Activated CD4-positive, alpha-beta T cell treated with anti-CD3 and anti-CD28 coated beads, Interleukin-2, amount 10 ng/mL, durations not matched to agents 24 days and 14 days (primary cell): ENCODE measurements at regions of chr7 and their contacts with region 1.

Region 1: DNA sequence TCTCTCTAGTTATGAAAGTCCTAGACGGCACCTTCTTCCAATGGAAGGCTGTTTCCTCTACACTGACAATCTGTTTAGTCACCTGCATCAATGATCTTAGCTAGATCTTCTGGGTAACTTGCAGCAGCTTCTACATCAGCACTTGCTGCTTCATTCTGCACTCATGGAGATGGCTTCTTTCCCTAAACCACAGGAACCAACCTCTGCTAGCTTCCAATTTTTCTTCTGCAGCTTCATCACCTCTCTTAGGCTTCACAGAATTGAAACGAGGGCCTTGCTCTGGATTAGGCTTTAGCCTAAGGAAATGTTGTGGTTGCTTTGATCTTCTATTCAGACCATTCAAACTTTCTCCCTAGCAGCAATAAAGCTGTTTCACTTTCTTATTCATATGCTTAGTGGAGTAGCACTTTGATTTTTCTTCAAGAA is 24.6 kb downstream of the NAMPT start:
- DNase-seq: peak; percentile 73
- H3K4me3 Mint-ChIP-seq: peak overlapping the region; percentile 62
- H3K27ac Mint-ChIP-seq: peak overlapping the region; percentile 78
- H3K4me1 Mint-ChIP-seq: peaks cover 37% of the 10 kb centered on the region
- H3K27me3 Mint-ChIP-seq: no peaks in the 10 kb centered on the region

Region 2: GRCh38 chr7:106279425-106280197 is 19.5 kb after region 1 on chr7:
- intact Hi-C with region 1: loop called (anchors 2 kb)
- DNase-seq: peak; percentile 73
- H3K4me3 Mint-ChIP-seq: peak overlapping the region; percentile 89
- H3K27ac Mint-ChIP-seq: peak overlapping the region; percentile 94
- H3K4me1 Mint-ChIP-seq: peaks cover 53% of the 10 kb centered on the region
- H3K27me3 Mint-ChIP-seq: no peaks in the 10 kb centered on the region